ENCODE measurements at regions of chr12 and their contacts with region 1.

Region 1: GRCh38 chr12:98439981-98440581 is 75.3 kb upstream of the TMPO start:
- DNase-seq: peak; percentile 95
- H3K4me3 ChIP-seq: peak overlapping the region in 1 of 3 experiments; percentile 21
- H3K27ac ChIP-seq: peak overlapping the region; percentile 88
- H3K4me1 ChIP-seq: peaks cover 18% of the 10 kb centered on the region
- H3K27me3 ChIP-seq: no peaks in the 10 kb centered on the region
- CTCF ChIP-seq: no peak
- POLR2A ChIP-seq: no peak

Region 2: DNA sequence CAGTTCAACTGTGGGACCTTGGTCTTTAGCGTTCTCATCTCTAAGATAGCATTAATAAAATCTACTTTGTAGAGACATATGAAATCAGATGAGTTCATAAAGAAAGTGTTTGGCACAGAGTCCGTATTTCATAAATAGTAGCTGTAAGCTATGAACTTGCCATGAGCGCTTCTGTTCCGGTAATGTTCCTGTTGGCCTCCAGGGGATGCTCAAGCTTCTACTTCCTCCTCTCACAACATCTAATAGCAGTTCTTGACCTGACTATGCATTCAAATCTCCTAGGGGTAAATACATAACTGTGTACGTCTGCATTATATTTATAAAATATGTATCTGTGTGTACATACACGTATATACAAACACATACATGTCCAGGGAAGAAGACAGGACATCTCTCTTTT is 212.9 kb before region 1 on chr12:
- CTCF ChIA-PET with region 1: no interaction called
- POLR2A ChIA-PET with region 1: no interaction called
- dilution Hi-C with region 1: no loop called
- intact Hi-C with region 1: no loop called
- DNase-seq: no peak
- H3K4me3 ChIP-seq: no peak overlapping the region
- H3K27ac ChIP-seq: no peak overlapping the region
- H3K4me1 ChIP-seq: no peaks in the 10 kb centered on the region
- H3K27me3 ChIP-seq: peaks cover 0 to 2% of the 10 kb centered on the region in 2 experiments
- CTCF ChIP-seq: peak in 1 of 2 donors; percentile 31
- POLR2A ChIP-seq: no peak

Region 3: DNA sequence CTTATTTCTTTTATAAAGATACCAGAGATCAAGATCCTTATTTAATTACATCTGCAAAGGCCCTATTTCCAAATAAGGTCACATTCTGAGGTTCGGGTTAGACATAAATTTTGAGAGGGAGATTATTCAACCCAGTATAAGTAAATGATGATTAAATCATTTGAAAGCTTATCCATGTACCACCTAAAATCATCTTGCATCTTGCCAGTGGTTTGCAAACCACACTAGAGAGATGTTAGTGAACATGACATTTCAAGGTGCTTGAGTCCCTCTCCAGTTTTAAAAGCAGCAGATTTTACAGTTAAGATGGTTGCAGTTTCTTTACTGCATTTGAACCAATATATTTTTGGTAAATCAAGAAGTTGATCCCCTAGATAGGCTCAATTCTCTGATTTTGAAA is 25.4 kb after region 1 on chr12:
- CTCF ChIA-PET with region 1: no interaction called
- POLR2A ChIA-PET with region 1: no interaction called
- dilution Hi-C with region 1: no loop called
- intact Hi-C with region 1: no loop called
- DNase-seq: no peak
- H3K4me3 ChIP-seq: no peak overlapping the region
- H3K27ac ChIP-seq: no peak overlapping the region
- H3K4me1 ChIP-seq: peaks cover 8% of the 10 kb centered on the region
- H3K27me3 ChIP-seq: no peaks in the 10 kb centered on the region
- CTCF ChIP-seq: no peak
- POLR2A ChIP-seq: no peak

Region 4: GRCh38 chr12:98503592-98504367 is 63.7 kb after region 1 on chr12:
- CTCF ChIA-PET with region 1: no interaction called
- POLR2A ChIA-PET with region 1: no interaction called
- dilution Hi-C with region 1: no loop called
- intact Hi-C with region 1: loop called (anchors 1 kb)
- DNase-seq: peak; percentile 95
- H3K4me3 ChIP-seq: peak overlapping the region in 2 of 3 experiments; percentile 50 to 83
- H3K27ac ChIP-seq: peak overlapping the region; percentile 93
- H3K4me1 ChIP-seq: peaks cover 2% of the 10 kb centered on the region
- H3K27me3 ChIP-seq: no peaks in the 10 kb centered on the region
- CTCF ChIP-seq: no peak
- POLR2A ChIP-seq: peak; percentile 45

Region 5: GRCh38 chr12:98559666-98560065 is 119.6 kb after region 1 on chr12:
- CTCF ChIA-PET with region 1: no interaction called
- POLR2A ChIA-PET with region 1: no interaction called
- dilution Hi-C with region 1: no loop called
- intact Hi-C with region 1: no loop called
- DNase-seq: no peak
- H3K4me3 ChIP-seq: no peak overlapping the region
- H3K27ac ChIP-seq: no peak overlapping the region
- H3K4me1 ChIP-seq: no peaks in the 10 kb centered on the region
- H3K27me3 ChIP-seq: no peaks in the 10 kb centered on the region
- CTCF ChIP-seq: no peak
- POLR2A ChIP-seq: no peak

Measured in endothelial cell of umbilical vein (primary cell).